ENCODE measurements at regions of chr9 and their contacts with region 1.

Region 1: DNA sequence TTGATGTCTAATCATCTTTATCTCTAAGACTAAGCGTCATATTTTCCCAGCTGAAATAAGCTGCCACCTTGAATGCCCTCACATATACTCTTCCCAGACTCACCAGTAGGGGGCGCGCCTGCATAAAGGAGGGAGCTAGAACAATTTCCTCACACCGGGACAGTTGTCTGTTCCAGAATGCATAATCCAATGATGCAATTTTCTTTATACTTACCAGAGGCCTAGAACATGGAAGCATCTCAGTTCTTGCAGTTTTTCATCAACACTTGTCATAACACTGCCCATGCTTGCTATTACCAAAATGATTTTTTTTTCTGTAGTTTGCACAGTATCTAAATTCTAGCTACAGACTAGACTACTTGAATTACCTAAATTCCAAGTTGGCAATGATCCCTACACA is 203.9 kb downstream of the FRMD3 start:
- DNase-seq: peak; percentile 11
- H3K4me3 ChIP-seq: no peak overlapping the region
- H3K27ac ChIP-seq: no peak overlapping the region
- H3K4me1 ChIP-seq: no peaks in the 10 kb centered on the region
- H3K27me3 ChIP-seq: no peaks in the 10 kb centered on the region
- CTCF ChIP-seq: peak; percentile 62 to 87 (median 82)
- POLR2A ChIP-seq: no peak

Region 2: GRCh38 chr9:83422527-83422926 is 88.2 kb after region 1 on chr9:
- intact Hi-C with region 1: no loop called
- DNase-seq: no peak
- H3K4me3 ChIP-seq: no peak overlapping the region
- H3K27ac ChIP-seq: no peak overlapping the region
- H3K4me1 ChIP-seq: peaks cover 0 to 24% (median 6%) of the 10 kb centered on the region in 3 donors
- H3K27me3 ChIP-seq: no peaks in the 10 kb centered on the region
- CTCF ChIP-seq: no peak
- POLR2A ChIP-seq: no peak

Region 3: DNA sequence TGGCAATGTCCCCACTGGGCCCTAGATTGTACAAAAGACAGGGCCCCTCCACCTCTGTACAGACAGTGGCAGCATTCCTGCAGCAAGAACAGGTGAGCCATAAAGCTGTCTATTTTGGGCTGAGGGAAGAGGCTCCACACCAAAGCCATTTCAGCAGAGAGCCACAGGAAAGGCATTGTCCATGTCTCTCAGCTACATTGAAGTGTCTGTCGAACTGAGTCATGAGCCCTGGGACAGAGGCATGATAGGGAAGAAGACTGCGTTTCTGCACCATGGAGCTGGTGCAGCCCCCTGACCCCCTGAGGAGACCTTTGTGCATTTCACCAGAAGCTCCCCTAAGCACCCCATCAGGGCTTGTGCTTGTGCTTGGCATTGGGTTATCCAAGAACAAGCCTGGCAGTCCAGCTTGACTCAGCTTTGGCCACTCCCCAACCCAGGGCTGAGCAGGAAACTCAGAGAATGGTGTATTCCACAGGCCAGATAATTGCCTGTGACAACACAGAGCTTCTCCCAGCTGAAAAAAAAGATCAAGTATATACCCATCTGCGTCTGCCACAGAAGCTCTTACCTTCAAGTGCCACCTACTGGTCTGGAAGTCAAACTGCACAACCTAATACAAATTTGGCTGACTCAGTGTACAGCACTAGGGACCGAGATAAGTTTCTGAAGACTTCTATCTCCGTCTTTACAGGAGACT is 209.8 kb after region 1 on chr9:
- intact Hi-C with region 1: loop called (anchors 10 kb)
- DNase-seq: no peak
- H3K4me3 ChIP-seq: no peak overlapping the region
- H3K27ac ChIP-seq: no peak overlapping the region
- H3K4me1 ChIP-seq: peaks cover 0 to 6% (median 0%) of the 10 kb centered on the region in 3 donors
- H3K27me3 ChIP-seq: peaks cover 0 to 7% (median 0%) of the 10 kb centered on the region in 4 donors
- CTCF ChIP-seq: peak in 5 of 6 experiments; percentile 52 to 75 (median 63)
- POLR2A ChIP-seq: no peak

Measured in esophagus squamous epithelium (tissue), 5 donors.